ENCODE measurements at regions of chr2 and their contacts with region 1.

Region 1: GRCh38 chr2:45935791-45936622 is 284.5 kb downstream of the PRKCE start:
- DNase-seq: peak; percentile 94
- H3K4me3 ChIP-seq: no peak overlapping the region
- H3K27me3 ChIP-seq: no peaks in the 10 kb centered on the region
- CTCF ChIP-seq: peak; percentile 78

Region 2: GRCh38 chr2:45643543-45644542 is 292.2 kb before region 1 on chr2:
- CTCF ChIA-PET with region 1: interaction called, 18 read pairs
- POLR2A ChIA-PET with region 1: no interaction called
- DNase-seq: no peak
- H3K4me3 ChIP-seq: peak overlapping the region; percentile 53
- H3K27me3 ChIP-seq: peaks cover 12% of the 10 kb centered on the region
- CTCF ChIP-seq: peak; percentile 67

Region 3: GRCh38 chr2:45650851-45651414 is 285.1 kb before region 1 on chr2:
- CTCF ChIA-PET with region 1: interaction called, 11 read pairs
- POLR2A ChIA-PET with region 1: no interaction called
- DNase-seq: peak; percentile 81
- H3K4me3 ChIP-seq: peak overlapping the region; percentile 83
- H3K27me3 ChIP-seq: no peaks in the 10 kb centered on the region
- CTCF ChIP-seq: peak; percentile 55